Activated T-helper 2 cell treated with anti-CD3 and anti-CD28 coated beads, Interferon-gamma antibody, Interleukin-2, Interleukin-4, amounts not matched to agents 10 μg/mL and 5 μg/mL and 100 μg/mL, durations not matched to agents 14 hours and 24 hours and 36 hours (primary cell): ENCODE measurements at regions of chr11 and their contacts with region 1.

Region 1: DNA sequence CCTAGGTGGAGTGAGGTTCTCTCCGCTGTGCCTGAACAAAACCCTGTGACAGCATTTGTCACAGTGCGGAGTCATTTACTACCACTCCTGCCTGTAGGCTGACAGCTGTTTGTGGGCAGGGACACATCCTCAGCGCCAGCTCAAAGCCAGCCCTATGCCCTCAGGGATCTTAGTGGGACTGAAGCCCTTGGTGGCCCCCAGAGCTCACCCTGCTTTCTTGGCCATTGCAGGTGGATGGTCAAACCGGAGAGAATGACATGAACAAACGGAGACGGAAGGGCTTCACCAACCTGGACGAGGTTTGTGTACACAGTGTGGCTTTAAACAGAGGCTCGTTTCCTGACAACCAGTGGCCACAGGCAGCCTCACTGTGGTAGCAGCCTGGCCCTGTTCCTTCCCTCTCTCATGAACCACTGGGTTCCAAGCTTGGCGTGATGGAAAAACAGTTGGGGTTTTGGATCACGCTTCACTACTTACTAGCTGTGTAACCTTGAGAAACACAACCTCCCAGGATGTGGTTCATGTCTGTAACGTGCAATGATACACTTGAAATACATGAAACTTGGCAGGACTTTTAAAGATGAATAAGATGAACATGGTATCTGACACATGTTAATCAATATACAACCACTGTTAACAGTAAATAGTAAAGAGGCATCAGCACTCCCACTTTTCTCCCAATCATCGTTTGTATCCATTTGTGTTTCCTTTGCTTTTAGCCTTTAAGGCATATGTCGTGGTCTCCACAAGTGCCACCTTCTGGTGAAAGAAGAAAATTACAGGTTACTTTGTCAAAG is 125.8 kb downstream of the MICAL2 start:
- DNase-seq: peak; percentile 67
- H3K4me3 Mint-ChIP-seq: peak overlapping the region; percentile 33
- H3K27ac Mint-ChIP-seq: peak overlapping the region; percentile 96
- H3K4me1 Mint-ChIP-seq: peaks cover 57% of the 10 kb centered on the region
- H3K27me3 Mint-ChIP-seq: no peaks in the 10 kb centered on the region

Region 2: GRCh38 chr11:11227296-11228085 is 1008.7 kb before region 1 on chr11:
- intact Hi-C with region 1: no loop called
- DNase-seq: no peak
- H3K4me3 Mint-ChIP-seq: no peak overlapping the region
- H3K27ac Mint-ChIP-seq: no peak overlapping the region
- H3K4me1 Mint-ChIP-seq: no peaks in the 10 kb centered on the region
- H3K27me3 Mint-ChIP-seq: peaks cover 3% of the 10 kb centered on the region

Region 3: GRCh38 chr11:12087075-12088004 is 148.8 kb before region 1 on chr11:
- intact Hi-C with region 1: loop called (anchors 2 kb)
- DNase-seq: peak; percentile 58
- H3K4me3 Mint-ChIP-seq: no peak overlapping the region
- H3K27ac Mint-ChIP-seq: peak overlapping the region; percentile 74
- H3K4me1 Mint-ChIP-seq: peaks cover 64% of the 10 kb centered on the region
- H3K27me3 Mint-ChIP-seq: no peaks in the 10 kb centered on the region

Region 4: DNA sequence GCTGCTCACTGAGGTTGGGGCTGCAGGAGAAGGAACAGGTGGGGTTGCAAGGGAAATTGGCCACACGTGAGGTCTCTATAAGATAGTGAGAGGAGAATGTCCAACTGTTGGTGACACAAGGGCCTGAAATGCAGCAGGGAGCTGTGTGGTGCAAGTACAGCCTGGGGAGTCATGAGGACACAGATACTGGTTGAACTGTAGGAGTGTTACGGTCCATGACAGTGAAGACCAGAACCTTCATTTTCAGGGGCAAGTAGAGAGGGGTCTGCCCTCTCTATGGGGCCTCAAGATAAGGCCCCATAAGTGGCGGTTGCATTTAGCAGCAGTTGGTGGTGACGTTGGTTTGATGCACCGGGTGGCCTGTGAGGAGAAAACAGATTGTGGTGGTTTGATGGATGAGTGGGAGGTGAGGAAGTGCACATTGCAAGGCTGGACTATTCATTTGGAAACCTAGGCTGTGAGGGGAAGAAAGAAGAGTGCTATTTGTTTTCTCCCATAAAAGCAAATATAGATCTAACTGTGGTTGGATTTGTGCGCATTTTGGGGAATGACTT is 86.4 kb before region 1 on chr11:
- intact Hi-C with region 1: loop called (anchors 1 kb)
- DNase-seq: peak; percentile 31
- H3K4me3 Mint-ChIP-seq: peak overlapping the region; percentile 43
- H3K27ac Mint-ChIP-seq: peak overlapping the region; percentile 96
- H3K4me1 Mint-ChIP-seq: peaks cover 74% of the 10 kb centered on the region
- H3K27me3 Mint-ChIP-seq: no peaks in the 10 kb centered on the region

Region 5: DNA sequence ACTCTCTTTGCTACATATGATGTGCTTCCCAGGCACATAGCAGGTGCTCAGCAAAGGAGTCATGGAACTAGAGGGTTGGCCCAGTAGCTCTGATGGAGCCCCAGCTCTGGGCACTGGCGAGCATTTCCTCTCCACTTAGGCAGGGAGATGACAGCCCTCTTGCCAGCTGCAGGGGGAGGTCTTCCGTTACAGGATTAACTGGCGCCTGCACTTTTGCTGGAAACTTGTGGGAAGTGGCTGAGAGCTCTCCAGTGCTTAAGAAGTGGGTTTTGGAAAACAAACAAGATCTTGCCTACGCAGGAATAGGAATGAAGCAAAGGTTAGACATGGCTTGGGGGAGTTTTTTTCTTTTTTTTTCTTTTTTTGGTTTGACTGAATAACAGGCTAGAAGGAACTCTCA is 50.2 kb before region 1 on chr11:
- intact Hi-C with region 1: loop called (anchors 1 kb)
- DNase-seq: no peak
- H3K4me3 Mint-ChIP-seq: no peak overlapping the region
- H3K27ac Mint-ChIP-seq: peak overlapping the region; percentile 44
- H3K4me1 Mint-ChIP-seq: peaks cover 71% of the 10 kb centered on the region
- H3K27me3 Mint-ChIP-seq: no peaks in the 10 kb centered on the region

Region 6: DNA sequence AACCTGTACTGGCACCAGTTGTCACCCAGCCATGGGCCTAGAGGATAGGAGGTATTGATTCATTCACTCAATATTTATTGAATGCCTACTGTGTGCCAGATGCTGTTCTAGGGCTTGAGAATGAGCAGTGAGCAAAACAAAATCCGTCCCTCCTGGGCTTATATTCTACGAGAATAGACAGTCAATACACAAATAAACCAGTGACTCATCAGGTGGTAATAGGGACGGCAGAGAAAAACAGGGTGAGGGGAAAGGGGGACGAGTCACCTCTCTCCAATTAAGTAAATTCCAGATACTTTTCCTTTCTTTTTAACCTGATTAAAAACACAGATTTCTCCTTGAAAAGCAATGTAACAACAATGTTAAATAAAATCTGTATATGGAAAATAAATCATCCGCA is 22.2 kb before region 1 on chr11:
- intact Hi-C with region 1: no loop called
- DNase-seq: no peak
- H3K4me3 Mint-ChIP-seq: no peak overlapping the region
- H3K27ac Mint-ChIP-seq: peak overlapping the region; percentile 43
- H3K4me1 Mint-ChIP-seq: peaks cover 42% of the 10 kb centered on the region
- H3K27me3 Mint-ChIP-seq: no peaks in the 10 kb centered on the region

Region 7: GRCh38 chr11:12224537-12224893 is 11.6 kb before region 1 on chr11:
- intact Hi-C with region 1: loop called (anchors 1 kb)
- DNase-seq: peak; percentile 83
- H3K4me3 Mint-ChIP-seq: peak overlapping the region; percentile 51
- H3K27ac Mint-ChIP-seq: peak overlapping the region; percentile 91
- H3K4me1 Mint-ChIP-seq: peaks cover 54% of the 10 kb centered on the region
- H3K27me3 Mint-ChIP-seq: no peaks in the 10 kb centered on the region

Region 8: DNA sequence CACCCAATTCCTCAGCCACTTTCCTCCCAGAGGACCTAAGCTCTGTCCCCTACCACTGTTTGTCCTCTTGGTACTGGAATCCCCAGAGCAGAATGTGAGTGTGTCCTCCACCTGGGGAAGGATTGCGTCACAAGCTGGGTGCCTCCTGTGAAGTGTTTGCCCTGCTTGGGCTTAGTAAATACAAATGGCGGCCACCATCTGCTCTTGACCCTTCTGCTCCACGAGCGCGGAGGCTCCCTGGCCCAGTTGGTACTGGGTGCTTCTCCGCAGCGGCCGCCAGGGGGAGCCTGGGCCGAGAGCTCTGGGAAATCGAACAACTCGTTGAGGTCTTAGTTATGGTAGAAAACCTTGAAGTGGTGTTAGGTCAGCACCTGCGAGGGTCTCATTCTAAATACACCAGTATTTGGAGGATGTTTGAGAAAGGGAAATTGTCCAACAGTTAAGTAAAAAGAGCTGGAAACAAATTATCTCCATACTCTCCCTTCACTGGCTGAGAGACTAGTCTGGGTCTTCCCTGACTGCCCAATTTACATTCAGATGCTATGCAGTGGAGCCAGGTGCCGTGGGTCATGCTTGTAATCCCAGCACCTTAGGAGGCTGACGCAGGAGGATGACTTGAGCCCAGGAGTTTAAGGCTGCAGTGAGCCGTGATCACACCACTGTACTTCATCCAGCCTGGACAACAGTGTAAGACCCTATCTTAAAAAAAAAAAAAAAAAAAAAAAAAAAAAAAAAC is 363.4 kb after region 1 on chr11:
- intact Hi-C with region 1: no loop called
- DNase-seq: peak; percentile 18
- H3K4me3 Mint-ChIP-seq: no peak overlapping the region
- H3K27ac Mint-ChIP-seq: no peak overlapping the region
- H3K4me1 Mint-ChIP-seq: no peaks in the 10 kb centered on the region
- H3K27me3 Mint-ChIP-seq: peaks cover 10% of the 10 kb centered on the region